Activated naive CD8-positive, alpha-beta T cell treated with anti-CD3 and anti-CD28 coated beads, Interleukin-2, amount 10 ng/mL, durations not matched to agents 7 days and 5 days (primary cell): ENCODE measurements at regions of chr2 and their contacts with region 1.

Region 1: DNA sequence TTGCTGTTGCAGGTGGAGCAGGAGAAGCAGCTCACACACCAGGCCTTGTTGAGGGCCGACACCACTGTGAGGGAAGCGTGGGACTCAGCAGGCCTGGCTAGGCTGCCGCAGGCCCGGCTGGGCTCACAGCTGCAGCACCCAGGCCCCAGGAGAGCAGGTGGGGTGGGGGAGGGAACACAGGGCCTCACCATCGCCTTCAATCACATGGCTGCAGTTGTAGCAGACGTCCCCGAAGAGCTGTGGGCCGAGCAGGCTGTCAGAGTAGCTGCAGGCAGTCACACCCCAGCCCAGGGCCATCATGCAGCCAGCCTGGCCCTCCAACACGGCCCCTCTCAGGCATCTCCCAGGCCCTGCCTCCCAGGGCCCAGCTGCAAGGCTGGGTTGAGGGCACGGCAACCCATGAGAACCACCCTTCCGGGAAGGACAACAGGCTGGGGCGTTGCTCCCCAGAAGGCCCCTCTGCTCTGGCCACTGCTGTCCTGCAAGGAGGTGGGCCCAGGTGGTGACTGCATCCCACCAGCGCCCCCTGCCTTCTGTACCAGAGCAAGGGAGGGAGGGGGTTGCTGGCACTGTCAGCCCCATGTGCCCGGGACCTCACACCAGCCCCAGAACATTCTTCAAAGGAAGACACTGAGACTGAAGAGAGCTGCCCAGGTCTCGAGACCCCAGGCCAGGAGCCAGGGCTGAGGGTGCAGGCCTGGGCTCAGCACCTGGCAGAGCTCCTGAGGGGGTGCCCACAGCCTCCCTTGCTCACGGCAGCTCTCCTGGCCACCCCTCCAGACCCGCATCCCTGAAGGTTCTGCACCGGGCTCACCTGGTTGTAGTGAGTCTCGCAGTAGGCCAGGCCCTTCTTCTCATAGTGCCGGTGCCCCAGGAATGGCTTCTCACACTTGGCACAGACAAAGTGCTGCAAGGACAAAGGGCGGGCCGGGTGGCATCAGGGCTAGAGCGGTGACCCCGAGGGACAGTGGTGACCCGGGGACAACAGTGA is 5.6 kb upstream of the GPR17 start:
- DNase-seq: peak; percentile 71
- ATAC-seq: peak; percentile 48
- H3K4me3 Mint-ChIP-seq: peak overlapping the region; percentile 75
- H3K27ac Mint-ChIP-seq: peak overlapping the region; percentile 88
- H3K4me1 Mint-ChIP-seq: peaks cover 23% of the 10 kb centered on the region
- H3K27me3 Mint-ChIP-seq: no peaks in the 10 kb centered on the region

Region 2: GRCh38 chr2:127479219-127479825 is 161.1 kb before region 1 on chr2:
- POLR2A ChIA-PET with region 1: no interaction called
- DNase-seq: no peak
- ATAC-seq: peak; percentile 52
- H3K4me3 Mint-ChIP-seq: no peak overlapping the region
- H3K27ac Mint-ChIP-seq: no peak overlapping the region
- H3K4me1 Mint-ChIP-seq: no peaks in the 10 kb centered on the region
- H3K27me3 Mint-ChIP-seq: no peaks in the 10 kb centered on the region

Region 3: DNA sequence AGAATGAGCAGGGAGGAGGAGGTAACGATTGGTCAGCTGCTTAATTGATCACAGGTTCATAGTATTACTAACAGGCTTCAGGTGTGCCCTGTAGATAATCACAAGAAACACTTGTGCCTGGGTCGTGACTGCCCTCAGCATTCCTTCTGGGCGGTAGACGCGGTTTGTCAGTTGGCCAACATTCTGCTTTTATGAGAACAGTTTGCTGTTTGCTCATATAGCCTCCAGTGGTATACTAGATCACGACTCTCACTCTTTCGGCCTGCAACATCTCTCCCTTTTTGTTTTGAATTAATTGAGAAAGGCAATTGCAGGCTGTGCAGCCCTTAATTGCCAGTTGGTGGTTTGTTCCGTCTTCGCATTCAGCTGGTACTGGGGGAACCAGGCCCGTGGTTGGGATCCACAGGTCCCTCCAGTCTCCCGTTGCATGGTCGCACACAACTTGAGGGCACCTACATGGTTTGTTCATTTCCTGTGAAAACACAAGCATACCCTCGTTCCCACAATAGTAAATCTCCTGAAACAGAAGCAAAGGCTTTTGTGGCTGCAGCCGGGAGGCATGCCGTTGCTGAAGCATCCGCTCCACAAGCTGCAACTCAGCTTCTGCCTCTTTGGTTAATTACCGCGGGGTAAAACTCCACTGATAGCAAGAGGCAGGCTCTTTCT is 24.7 kb before region 1 on chr2:
- POLR2A ChIA-PET with region 1: interaction called, 11 read pairs
- DNase-seq: no peak
- ATAC-seq: peak; percentile 76
- H3K4me3 Mint-ChIP-seq: peak overlapping the region; percentile 42
- H3K27ac Mint-ChIP-seq: no peak overlapping the region
- H3K4me1 Mint-ChIP-seq: peaks cover 23% of the 10 kb centered on the region
- H3K27me3 Mint-ChIP-seq: peaks cover 6% of the 10 kb centered on the region

Region 4: GRCh38 chr2:127701193-127701650 is 60.8 kb after region 1 on chr2 and contains the start of gene SFT2D3:
- POLR2A ChIA-PET with region 1: interaction called, 17 read pairs
- DNase-seq: peak; percentile 90
- ATAC-seq: peak; percentile 78
- H3K4me3 Mint-ChIP-seq: peak within 1 kb of the TSS; percentile 90
- H3K27ac Mint-ChIP-seq: peak within 1 kb of the TSS; percentile 97
- H3K4me1 Mint-ChIP-seq: peaks cover 25% of the 10 kb centered on the region
- H3K27me3 Mint-ChIP-seq: no peaks in the 10 kb centered on the region
- total RNA-seq, gene SFT2D3: 7.5 to 8.7 TPM

Region 5: DNA sequence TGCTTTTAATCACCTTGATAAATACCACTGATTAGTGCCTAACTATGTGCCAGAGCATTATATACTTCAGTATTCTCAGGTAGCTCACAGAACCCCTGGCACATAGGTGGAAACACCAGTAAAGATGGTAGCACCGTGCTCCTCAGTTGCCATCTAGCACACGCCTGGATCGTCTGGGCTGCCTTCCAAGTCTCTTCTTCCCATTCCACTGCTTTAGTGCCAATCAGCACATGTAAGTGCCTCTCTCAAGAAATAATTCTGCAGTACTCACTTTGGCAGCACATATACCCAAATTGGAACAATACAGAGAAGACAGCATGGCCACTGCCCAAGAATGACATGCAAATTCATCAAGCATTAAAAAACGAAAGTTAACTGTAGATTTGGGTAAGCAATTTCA is 204.6 kb after region 1 on chr2:
- POLR2A ChIA-PET with region 1: no interaction called
- DNase-seq: no peak
- ATAC-seq: no peak
- H3K4me3 Mint-ChIP-seq: no peak overlapping the region
- H3K27ac Mint-ChIP-seq: no peak overlapping the region
- H3K4me1 Mint-ChIP-seq: peaks cover 9% of the 10 kb centered on the region
- H3K27me3 Mint-ChIP-seq: no peaks in the 10 kb centered on the region

Region 6: DNA sequence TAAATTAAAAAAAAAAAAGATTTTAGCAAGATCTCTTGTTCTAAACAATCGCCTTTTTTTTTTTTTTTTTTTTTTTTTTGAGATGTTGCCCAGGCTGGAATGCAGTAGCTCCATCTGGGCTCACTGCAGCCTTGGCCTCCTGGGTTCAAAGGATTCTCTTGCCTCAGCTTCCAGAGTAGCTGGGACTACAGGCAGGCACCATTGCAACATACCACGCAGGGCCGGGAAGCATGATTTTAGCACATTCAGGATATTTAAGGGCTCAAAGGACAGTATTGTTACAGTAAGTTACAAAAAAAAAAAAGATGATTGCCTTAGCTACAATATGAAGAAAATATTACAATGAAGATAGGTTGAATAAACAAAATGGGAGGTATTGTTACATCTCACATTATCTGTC is 417.0 kb after region 1 on chr2:
- POLR2A ChIA-PET with region 1: no interaction called
- DNase-seq: no peak
- ATAC-seq: no peak
- H3K4me3 Mint-ChIP-seq: no peak overlapping the region
- H3K27ac Mint-ChIP-seq: no peak overlapping the region
- H3K4me1 Mint-ChIP-seq: no peaks in the 10 kb centered on the region
- H3K27me3 Mint-ChIP-seq: peaks cover 6% of the 10 kb centered on the region